ENCODE measurements at regions of chr9 and their contacts with region 1.

Region 1: DNA sequence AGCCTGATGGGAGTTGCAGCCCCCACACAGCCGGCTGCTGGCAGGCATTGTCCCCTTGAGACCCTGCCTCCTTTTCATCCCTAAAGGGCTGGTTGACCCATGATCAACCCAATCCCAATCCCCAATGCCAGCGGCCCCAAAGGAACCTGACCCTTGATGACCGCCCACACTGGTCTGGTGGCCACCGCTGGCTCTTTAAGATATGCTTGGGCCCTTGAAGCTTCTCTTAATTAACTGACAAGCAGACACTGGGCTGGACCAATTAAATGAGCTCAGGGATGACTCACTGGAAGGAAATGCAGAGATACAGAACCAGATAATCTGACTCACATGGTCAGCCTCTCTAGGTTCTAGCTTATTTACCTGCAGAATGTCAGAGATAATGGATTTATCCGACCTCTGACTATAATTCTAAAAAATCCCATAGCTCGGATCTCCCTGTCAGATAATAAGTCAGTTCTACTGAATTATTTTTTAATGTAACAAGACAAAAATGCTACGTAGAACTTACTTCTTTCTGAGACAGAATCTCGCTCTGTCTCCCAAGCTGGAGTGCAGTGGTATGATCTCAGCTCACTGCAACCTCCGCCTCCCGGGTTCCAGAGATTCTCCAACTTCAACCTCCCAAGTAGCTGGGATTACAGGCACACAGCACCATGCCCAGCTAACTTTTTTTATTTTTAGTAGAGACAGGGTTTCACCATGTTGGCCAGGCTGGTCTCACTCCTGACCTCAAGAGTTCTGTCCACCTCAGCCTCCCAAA is 11.1 kb upstream of the MLANA start:
- DNase-seq: no peak
- H3K4me3 Mint-ChIP-seq: no peak overlapping the region
- H3K27ac Mint-ChIP-seq: no peak overlapping the region
- H3K4me1 Mint-ChIP-seq: peaks cover 28% of the 10 kb centered on the region
- H3K27me3 Mint-ChIP-seq: no peaks in the 10 kb centered on the region

Region 2: GRCh38 chr9:5843794-5844504 is 35.7 kb before region 1 on chr9:
- intact Hi-C with region 1: loop called (anchors 5 kb)
- DNase-seq: no peak
- H3K4me3 Mint-ChIP-seq: peak overlapping the region; percentile 64
- H3K27ac Mint-ChIP-seq: peak overlapping the region; percentile 95
- H3K4me1 Mint-ChIP-seq: peaks cover 79% of the 10 kb centered on the region
- H3K27me3 Mint-ChIP-seq: no peaks in the 10 kb centered on the region

Region 3: DNA sequence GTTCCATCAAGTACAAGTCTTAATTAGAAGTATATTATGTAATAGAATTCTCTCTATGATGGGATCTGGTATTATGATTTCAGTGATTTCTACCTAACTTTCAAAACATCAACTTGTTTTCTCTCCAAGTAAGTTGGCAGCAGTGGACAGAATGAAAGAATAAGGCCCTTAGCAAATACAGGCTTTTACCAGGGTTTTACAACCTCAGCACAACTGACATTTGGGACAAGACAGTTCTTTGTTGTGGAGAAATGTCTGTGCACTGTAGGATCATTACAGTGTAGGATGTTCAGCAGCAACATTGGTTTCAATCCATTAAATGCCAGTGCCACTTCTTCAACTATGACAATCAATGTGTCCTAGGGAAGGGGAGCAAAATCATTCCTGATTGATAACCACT is 59.9 kb after region 1 on chr9:
- intact Hi-C with region 1: no loop called
- DNase-seq: no peak
- H3K4me3 Mint-ChIP-seq: no peak overlapping the region
- H3K27ac Mint-ChIP-seq: no peak overlapping the region
- H3K4me1 Mint-ChIP-seq: no peaks in the 10 kb centered on the region
- H3K27me3 Mint-ChIP-seq: no peaks in the 10 kb centered on the region